K562 (cell line): ENCODE measurements at regions of chr22 and their contacts with region 1.

Region 1: GRCh38 chr22:35150183-35151107 is 84.5 kb downstream of the ISX start:
- DNase-seq: peak; percentile 41 to 72 (median 54)
- ATAC-seq: peak; percentile 93
- H3K4me3 ChIP-seq: no peak overlapping the region
- H3K27ac ChIP-seq: no peak overlapping the region
- H3K4me1 ChIP-seq: peaks cover 0 to 2% of the 10 kb centered on the region in 2 experiments; a peak in 3 of 5 replicates
- H3K27me3 ChIP-seq: no peaks in the 10 kb centered on the region
- CTCF ChIP-seq: peak; percentile 71 to 81 (median 71)
- EP300 ChIP-seq: no peak
- POLR2A ChIP-seq: no peak
- RAD21 ChIP-seq: peak; percentile 41 to 71

Region 2: DNA sequence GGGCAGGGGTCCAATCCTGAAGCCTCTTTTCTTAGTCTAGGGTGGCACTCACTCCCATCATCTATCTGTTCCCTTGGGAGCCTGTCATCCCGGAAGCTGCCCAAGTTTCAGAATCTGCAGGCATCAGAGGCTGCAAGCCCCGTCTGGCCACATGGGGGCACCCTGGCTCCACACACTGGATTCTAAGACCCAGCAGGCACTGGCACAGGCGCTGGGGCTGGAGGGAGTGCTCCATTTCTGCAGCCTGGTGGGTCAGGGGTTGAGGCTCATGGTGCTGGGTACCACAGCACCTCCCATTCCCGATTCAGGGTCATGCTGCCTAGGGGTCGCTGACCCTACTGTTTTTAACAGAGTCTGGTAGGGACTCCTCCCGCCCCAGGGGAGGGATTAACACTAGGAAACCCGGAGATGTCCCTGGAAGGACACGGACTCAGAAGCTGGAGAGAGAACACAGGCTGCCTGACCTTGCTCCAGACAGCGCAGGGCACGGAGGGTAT is 1848.3 kb before region 1 on chr22:
- CTCF ChIA-PET with region 1: no interaction called
- POLR2A ChIA-PET with region 1: no interaction called
- in situ Hi-C with region 1: no loop called
- intact Hi-C with region 1: loop called (anchors 5 kb)
- DNase-seq: peak; percentile 56 to 68 (median 60)
- ATAC-seq: peak; percentile 91
- H3K4me3 ChIP-seq: no peak overlapping the region
- H3K27ac ChIP-seq: no peak overlapping the region
- H3K4me1 ChIP-seq: no peaks in the 10 kb centered on the region
- H3K27me3 ChIP-seq: no peaks in the 10 kb centered on the region
- CTCF ChIP-seq: peak; percentile 75 to 80 (median 76)
- EP300 ChIP-seq: no peak
- POLR2A ChIP-seq: no peak
- RAD21 ChIP-seq: peak; percentile 56 to 78

Region 3: DNA sequence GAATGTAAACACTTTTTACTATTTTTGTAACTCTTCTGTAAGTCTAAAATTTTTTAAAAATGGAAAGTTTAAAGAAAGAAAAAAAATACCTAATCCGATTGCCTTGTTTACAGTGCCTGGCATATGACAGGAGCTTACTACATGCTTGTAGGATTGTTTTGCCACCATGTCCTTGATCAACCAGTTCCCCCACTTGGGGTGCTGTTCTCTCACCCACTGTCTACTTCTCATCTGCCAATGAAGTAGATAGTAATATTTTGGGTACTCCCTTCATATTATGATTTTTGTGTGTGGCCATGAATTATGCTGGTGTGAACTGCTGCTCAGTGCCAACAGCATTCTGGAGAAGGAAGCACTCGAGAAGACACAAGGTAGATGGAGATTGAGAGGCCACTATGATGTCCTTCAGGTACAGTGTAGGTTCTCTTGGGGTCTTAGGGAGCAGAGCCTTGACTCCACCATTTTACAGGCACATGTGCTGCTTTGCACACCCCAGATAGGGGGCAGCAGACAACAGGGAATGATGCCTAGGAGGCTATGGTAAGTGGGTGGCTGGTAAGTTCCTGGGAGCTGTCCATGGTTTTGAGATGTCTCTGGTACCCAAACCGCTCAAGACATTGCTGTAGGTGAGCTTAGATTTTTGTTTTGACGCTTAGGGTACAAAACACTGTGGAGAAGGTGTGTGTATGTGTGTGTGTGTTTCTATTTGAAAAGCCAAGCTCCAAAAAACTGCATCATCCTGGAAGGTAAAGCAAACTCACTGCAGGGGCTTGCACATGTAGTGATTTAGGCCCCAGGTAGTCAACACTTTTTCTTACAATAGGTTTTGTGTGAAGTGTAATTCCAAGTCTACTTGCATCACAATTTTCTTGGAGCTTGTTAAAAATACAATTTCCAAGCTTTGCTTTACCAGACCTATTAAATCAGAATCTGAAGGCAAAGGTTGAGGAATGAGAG is 735.7 kb before region 1 on chr22:
- CTCF ChIA-PET with region 1: no interaction called
- POLR2A ChIA-PET with region 1: no interaction called
- in situ Hi-C with region 1: loop called (anchors 25 kb)
- intact Hi-C with region 1: no loop called
- DNase-seq: peak; percentile 11 to 41 (median 14)
- ATAC-seq: no peak
- H3K4me3 ChIP-seq: no peak overlapping the region
- H3K27ac ChIP-seq: no peak overlapping the region
- H3K4me1 ChIP-seq: no peaks in the 10 kb centered on the region
- H3K27me3 ChIP-seq: no peaks in the 10 kb centered on the region
- CTCF ChIP-seq: peak; percentile 39 to 43 (median 40); a peak in 5 of 6 replicates
- EP300 ChIP-seq: no peak
- POLR2A ChIP-seq: no peak
- RAD21 ChIP-seq: peak; percentile 32 to 65; a peak in 3 of 4 replicates

Region 4: DNA sequence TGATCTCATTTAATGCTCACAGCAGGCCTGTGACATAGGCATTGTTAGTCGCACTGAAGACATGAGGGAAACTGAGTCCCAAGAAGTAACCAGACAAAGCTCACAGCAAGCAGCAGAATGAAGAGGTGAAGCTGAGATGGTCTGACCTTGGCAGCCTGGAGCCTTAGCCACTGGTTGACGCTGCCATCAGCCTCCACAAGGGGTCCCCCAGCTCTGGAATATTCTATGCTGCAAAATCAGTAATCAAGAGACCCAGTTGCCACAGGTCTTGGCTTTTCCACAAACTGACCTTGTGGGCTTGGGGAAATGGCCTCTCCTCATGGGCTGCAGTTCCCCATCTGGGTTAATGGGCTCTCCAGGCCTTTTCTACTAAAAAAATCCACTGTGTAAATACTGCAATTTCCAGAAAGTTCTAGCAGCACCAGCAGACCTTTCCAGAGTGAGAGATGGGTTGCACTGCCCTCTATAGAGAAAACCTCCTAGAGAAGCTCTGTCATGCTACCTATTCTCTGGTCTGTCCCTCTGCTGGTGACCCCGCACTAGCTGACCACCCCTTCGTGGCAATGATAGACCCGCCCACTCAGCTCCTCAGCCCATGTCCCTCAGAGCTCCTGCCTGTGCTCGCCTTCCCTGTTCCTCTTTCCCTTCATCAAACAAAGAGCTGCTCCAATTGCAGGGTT is 107.1 kb before region 1 on chr22:
- CTCF ChIA-PET with region 1: interaction called, 3 read pairs
- POLR2A ChIA-PET with region 1: no interaction called
- in situ Hi-C with region 1: loop called (anchors 5 kb)
- intact Hi-C with region 1: no loop called
- DNase-seq: peak; percentile 22 to 50 (median 32)
- ATAC-seq: peak; percentile 94
- H3K4me3 ChIP-seq: no peak overlapping the region
- H3K27ac ChIP-seq: no peak overlapping the region
- H3K4me1 ChIP-seq: no peaks in the 10 kb centered on the region
- H3K27me3 ChIP-seq: no peaks in the 10 kb centered on the region; a peak in 1 of 5 replicates
- CTCF ChIP-seq: peak; percentile 39 to 59 (median 50); a peak in 5 of 6 replicates
- EP300 ChIP-seq: no peak
- POLR2A ChIP-seq: no peak
- RAD21 ChIP-seq: peak; percentile 28 to 71; a peak in 3 of 4 replicates